ENCODE measurements at regions of chr7 and their contacts with region 1.

Region 1: DNA sequence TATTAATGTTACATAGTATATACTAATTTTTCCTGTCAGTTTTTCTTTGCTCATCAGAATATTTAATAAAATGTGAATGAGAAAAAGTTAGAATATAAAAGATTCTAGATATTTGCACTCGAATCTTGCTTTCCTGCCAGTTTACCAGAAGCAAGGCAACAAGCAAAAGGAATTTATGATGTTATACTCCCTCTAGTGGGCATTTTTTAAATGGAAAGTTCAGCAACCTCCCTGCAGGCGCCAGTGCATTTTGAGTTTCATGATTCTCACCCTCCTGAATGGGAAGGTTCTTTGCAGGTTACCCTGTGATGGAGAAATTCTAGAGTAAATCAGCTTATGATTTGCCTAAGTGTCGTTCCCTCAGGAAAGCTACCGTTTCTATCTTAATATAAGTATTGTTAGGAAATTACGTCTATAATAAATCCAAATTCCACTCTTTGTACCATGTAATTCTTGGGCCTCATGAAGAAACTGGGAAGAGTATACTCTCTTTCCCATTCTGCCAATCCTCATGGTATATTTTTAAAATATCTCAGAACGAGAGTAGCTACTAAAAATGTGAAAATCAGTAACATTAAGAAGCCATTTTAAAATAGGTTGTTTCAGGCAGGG is 350.0 kb downstream of the CRPPA start:
- DNase-seq: peak in 1 of 10 donors; percentile 5
- H3K4me3 ChIP-seq: no peak overlapping the region
- H3K27ac ChIP-seq: no peak overlapping the region
- H3K27me3 ChIP-seq: no peaks in the 10 kb centered on the region
- CTCF ChIP-seq: peak; percentile 85 to 98 (median 93)

Region 2: GRCh38 chr7:14717816-14718215 is 1353.5 kb before region 1 on chr7:
- intact Hi-C with region 1: loop called (anchors 10 kb)
- DNase-seq: no peak
- H3K4me3 ChIP-seq: peak overlapping the region in 3 of 59 donors; percentile 7 to 24 (median 24)
- H3K27ac ChIP-seq: no peak overlapping the region
- H3K27me3 ChIP-seq: no peaks in the 10 kb centered on the region
- CTCF ChIP-seq: peak; percentile 19 to 87 (median 69)

Region 3: GRCh38 chr7:15178065-15178464 is 893.3 kb before region 1 on chr7:
- intact Hi-C with region 1: loop called in 1 of 2 experiments (anchors 10 kb)
- DNase-seq: no peak
- H3K4me3 ChIP-seq: no peak overlapping the region
- H3K27ac ChIP-seq: no peak overlapping the region
- H3K27me3 ChIP-seq: peaks cover 0 to 3% (median 0%) of the 10 kb centered on the region in 45 donors
- CTCF ChIP-seq: no peak

Region 4: DNA sequence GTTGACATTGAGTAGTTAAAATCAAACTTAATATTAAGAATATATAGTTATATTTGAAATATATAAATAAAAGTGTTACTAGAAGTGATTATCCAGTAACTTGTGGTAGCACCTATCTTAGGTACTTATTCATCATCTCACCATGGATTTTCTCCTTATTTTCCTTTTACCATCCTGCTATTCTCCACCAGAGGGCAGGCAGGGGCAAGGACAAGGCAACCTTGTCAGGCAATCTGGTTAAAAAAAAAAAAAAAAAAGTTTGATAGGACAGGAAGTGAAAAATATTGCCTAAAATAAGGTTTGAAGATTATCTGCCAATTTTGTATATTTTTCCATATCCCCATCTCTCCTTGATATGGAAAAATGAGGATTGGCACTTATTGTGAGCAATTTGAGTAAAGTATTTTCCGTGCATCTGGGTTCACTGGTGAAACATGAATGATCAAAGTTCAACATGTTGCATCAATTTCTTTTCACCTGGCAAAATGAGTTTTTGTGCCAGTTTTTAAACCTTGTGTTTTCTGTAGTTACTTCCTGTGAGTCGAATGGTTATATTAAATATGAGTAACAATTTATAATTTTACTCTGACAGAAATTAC is 766.3 kb before region 1 on chr7:
- intact Hi-C with region 1: loop called (anchors 5 to 10 kb)
- DNase-seq: peak in 2 of 10 donors; percentile 36 to 42
- H3K4me3 ChIP-seq: no peak overlapping the region
- H3K27ac ChIP-seq: no peak overlapping the region
- H3K27me3 ChIP-seq: no peaks in the 10 kb centered on the region
- CTCF ChIP-seq: peak in 55 of 56 donors; percentile 58 to 87 (median 72)

Region 5: DNA sequence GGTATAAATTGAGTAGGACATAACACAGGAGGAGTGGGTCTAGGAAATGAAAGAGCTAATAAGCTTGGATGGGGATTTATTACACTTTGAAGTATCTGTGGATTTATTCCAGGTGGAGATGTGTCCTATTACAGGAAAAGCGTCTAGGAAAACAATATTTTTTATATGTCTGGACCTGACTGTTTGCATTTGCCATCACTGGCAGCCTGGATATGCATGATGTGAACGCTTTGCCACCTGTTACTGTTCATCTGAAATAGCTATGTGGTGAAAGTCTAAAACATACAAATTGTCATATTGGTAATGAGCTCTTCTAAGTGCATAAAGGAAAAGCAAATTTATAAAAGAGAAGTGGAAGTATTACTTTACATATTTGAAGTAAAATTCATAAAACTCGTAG is 478.0 kb before region 1 on chr7:
- intact Hi-C with region 1: no loop called
- DNase-seq: no peak
- H3K4me3 ChIP-seq: no peak overlapping the region
- H3K27ac ChIP-seq: no peak overlapping the region
- H3K27me3 ChIP-seq: no peaks in the 10 kb centered on the region
- CTCF ChIP-seq: no peak

Region 6: GRCh38 chr7:16420649-16421332 is 349.4 kb after region 1 on chr7:
- intact Hi-C with region 1: loop called in 1 of 2 experiments (anchors 10 kb)
- DNase-seq: peak; percentile 77 to 90 (median 87)
- H3K4me3 ChIP-seq: peak overlapping the region; percentile 41 to 88 (median 77)
- H3K27ac ChIP-seq: peak overlapping the region; percentile 92 to 100 (median 98)
- H3K27me3 ChIP-seq: no peaks in the 10 kb centered on the region
- CTCF ChIP-seq: peak in 29 of 56 donors; percentile 3 to 45 (median 25)